Panc1 (cell line): ENCODE measurements at regions of chr7 and their contacts with region 1.

Region 1: DNA sequence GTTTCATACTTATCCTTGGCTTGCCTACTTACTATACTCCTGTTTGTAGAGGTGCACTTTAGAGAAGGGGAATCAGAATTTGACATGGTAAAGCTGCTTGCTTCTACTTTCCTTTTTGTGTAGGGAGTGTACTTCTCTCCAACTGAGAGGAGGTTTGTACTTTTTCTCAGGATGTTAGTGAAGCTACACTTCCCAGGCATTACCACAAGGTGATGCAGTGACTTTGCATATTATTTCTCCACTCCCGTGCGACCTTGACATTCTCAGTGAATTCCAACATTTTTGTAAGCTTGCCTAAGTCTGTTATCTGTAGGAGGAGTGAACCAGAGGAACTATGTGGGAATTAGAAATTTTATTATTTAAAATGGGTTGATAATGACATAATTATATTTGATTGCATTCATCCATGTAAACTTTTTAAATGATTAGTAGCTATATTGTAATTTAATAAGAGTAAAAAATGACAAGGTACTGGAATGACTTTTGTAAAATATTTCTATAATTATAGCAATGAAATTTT is 5.2 kb downstream of the TAX1BP1 start:
- DNase-seq: peak; percentile 42
- ATAC-seq: peak; percentile 68
- H3K4me3 ChIP-seq: 0 out of 4 replicates have a peak overlapping the region, but pooled peaks of 1 of the 2 experiments have one; percentile 3
- H3K27ac ChIP-seq: peak overlapping the region; percentile 85
- H3K4me1 ChIP-seq: peaks cover 39% of the 10 kb centered on the region
- H3K27me3 ChIP-seq: no peaks in the 10 kb centered on the region
- CTCF ChIP-seq: peak; percentile 90

Region 2: GRCh38 chr7:27784393-27785053 is 39.4 kb after region 1 on chr7:
- CTCF ChIA-PET with region 1: no interaction called
- POLR2A ChIA-PET with region 1: no interaction called
- in situ Hi-C with region 1: no loop called
- intact Hi-C with region 1: loop called (anchors 5 kb)
- DNase-seq: peak; percentile 81
- ATAC-seq: peak; percentile 95
- H3K4me3 ChIP-seq: no peak overlapping the region
- H3K27ac ChIP-seq: peak overlapping the region; percentile 36; the same call in 1 of the 2 replicates
- H3K4me1 ChIP-seq: peaks cover 26% of the 10 kb centered on the region
- H3K27me3 ChIP-seq: no peaks in the 10 kb centered on the region
- CTCF ChIP-seq: peak; percentile 83